ENCODE measurements at regions of chr2 and their contacts with region 1.

Region 1: GRCh38 chr2:71226965-71227560 is at the start of gene PAIP2B:
- DNase-seq: peak; percentile 99 to 100
- H3K4me3 ChIP-seq: peak within 1 kb of the TSS; percentile 81
- H3K4me3 Mint-ChIP-seq: peak within 1 kb of the TSS; percentile 94
- H3K27ac Mint-ChIP-seq: peak within 1 kb of the TSS; percentile 83
- H3K4me1 ChIP-seq: no peaks in the 10 kb centered on the region
- H3K4me1 Mint-ChIP-seq: no peaks in the 10 kb centered on the region
- H3K27me3 ChIP-seq: no peaks in the 10 kb centered on the region
- H3K27me3 Mint-ChIP-seq: no peaks in the 10 kb centered on the region
- CTCF ChIP-seq: no peak
- total RNA-seq, gene PAIP2B: 9.1 and 9.9 TPM in 2 replicates

Region 2: DNA sequence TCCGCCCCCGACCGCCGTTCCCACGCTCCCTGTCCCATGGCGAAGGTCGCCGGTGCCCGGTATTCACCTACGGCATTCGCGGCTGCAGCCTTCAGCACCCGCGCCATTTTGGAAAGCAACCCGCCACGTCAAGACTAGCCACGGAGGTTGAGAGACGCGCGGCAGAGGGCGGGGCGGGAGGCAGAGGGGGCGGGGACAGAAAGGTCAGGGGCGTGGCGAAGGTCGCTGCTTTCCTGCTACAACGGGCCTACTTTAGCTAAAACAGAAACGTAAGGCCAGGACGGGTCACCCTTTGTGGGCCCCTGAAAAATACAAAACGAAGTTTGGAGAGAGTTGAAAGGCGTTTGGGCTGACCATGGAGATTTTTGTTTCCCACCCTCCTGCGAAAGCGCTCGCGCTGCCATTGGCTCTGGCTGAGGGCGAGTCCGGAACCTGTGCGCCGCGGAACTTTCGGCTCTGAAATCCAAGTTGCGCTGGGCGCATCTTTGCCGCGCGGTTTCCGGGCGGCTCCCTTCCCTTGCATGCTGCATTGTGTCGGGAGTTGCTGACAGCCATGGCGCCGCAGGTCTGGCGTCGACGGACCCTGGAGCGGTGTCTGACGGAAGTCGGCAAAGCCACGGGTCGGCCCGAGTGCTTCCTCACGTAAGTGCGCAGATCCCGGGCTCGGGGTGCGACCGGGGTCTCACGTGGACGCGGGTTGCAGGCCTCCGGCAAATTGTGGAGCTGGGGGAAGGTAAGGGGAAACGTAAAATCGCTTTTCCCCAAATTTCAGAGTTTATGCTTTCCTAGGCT is 96.8 kb before region 1 on chr2 and contains the starts of genes MCEE and MPHOSPH10:
- CTCF ChIA-PET with region 1: no interaction called
- POLR2A ChIA-PET with region 1: no interaction called
- intact Hi-C with region 1: loop called (anchors 1 kb)
- DNase-seq: peak; percentile 93
- H3K4me3 ChIP-seq: peak within 1 kb of the TSS; percentile 73
- H3K4me3 Mint-ChIP-seq: no peak within 1 kb of the TSS
- H3K27ac Mint-ChIP-seq: no peak within 1 kb of the TSS
- H3K4me1 ChIP-seq: 0 out of 2 replicates have a peak, but pooled peaks cover 4% of the 10 kb centered on the region
- H3K4me1 Mint-ChIP-seq: no peaks in the 10 kb centered on the region
- H3K27me3 ChIP-seq: no peaks in the 10 kb centered on the region
- H3K27me3 Mint-ChIP-seq: no peaks in the 10 kb centered on the region
- CTCF ChIP-seq: no peak
- total RNA-seq, gene MCEE: 13.7 and 15.6 TPM in 2 replicates
- total RNA-seq, gene MPHOSPH10: 53.2 and 57.8 TPM in 2 replicates

Region 3: DNA sequence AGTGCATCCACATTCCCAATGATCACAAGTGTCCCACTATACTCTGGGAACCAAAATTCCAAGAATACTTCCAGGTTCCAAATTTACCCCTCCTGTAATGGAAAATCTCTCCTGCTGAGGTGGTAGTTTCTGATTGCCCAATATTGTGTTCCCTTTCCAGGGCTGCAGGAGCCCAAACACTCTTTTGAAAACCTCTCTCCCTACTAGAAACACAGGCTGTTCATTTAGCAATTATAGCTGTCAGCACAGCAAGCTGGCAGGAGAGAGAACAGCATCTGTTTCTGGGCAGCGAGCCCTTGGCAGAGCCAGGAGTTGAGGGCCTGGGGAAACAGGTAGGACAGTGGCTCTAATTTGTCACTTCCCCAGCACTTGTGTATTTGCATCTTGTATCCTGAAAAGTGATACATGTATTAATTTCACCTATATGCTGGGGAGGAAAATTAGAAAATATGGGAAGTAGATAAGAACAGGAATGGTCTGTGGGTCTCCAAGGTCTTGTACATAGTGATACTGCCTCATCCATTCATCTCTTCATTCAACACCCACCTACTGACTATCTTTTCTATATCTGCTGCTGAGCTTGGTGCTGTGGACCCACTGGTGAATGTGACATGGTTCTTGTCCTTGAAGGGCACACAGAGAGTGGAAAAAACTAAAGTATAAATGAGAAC is 16.7 kb after region 1 on chr2:
- CTCF ChIA-PET with region 1: interaction called, 7 read pairs
- POLR2A ChIA-PET with region 1: interaction called, 4 read pairs
- intact Hi-C with region 1: loop called (anchors 1 kb)
- DNase-seq: no peak
- H3K4me3 ChIP-seq: no peak overlapping the region
- H3K4me3 Mint-ChIP-seq: peak overlapping the region; percentile 25
- H3K27ac Mint-ChIP-seq: peak overlapping the region; percentile 73
- H3K4me1 ChIP-seq: peaks cover 20% of the 10 kb centered on the region
- H3K4me1 Mint-ChIP-seq: peaks cover 22% of the 10 kb centered on the region
- H3K27me3 ChIP-seq: no peaks in the 10 kb centered on the region
- H3K27me3 Mint-ChIP-seq: no peaks in the 10 kb centered on the region
- CTCF ChIP-seq: no peak

Region 4: DNA sequence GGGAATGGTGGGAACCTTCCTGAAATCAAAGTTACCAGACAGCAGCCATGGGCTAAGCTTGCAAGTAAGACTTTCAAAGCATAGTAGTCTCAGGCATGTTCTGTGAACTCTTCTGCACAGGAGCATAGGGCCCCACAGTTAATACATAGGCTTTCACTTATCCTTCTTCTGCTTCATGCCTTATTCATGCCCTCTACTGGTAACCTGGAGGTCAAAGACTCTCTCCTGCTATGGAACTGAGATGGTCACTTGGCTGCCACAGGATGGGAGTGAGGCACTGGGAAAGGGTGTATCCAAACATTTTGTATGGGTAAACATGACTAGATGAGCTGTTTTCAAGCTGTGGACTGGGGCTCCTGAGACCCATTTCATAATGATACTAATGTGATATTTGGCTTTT is 55.4 kb after region 1 on chr2:
- CTCF ChIA-PET with region 1: interaction called, 9 read pairs
- POLR2A ChIA-PET with region 1: no interaction called
- intact Hi-C with region 1: loop called (anchors 1 kb)
- DNase-seq: peak; percentile 46 to 58
- H3K4me3 ChIP-seq: no peak overlapping the region
- H3K4me3 Mint-ChIP-seq: no peak overlapping the region
- H3K27ac Mint-ChIP-seq: no peak overlapping the region
- H3K4me1 ChIP-seq: peaks cover 7% of the 10 kb centered on the region; the same call in 1 of the 2 replicates
- H3K4me1 Mint-ChIP-seq: no peaks in the 10 kb centered on the region
- H3K27me3 ChIP-seq: no peaks in the 10 kb centered on the region
- H3K27me3 Mint-ChIP-seq: peaks cover 6% of the 10 kb centered on the region
- CTCF ChIP-seq: peak; percentile 43 to 61

Region 5: DNA sequence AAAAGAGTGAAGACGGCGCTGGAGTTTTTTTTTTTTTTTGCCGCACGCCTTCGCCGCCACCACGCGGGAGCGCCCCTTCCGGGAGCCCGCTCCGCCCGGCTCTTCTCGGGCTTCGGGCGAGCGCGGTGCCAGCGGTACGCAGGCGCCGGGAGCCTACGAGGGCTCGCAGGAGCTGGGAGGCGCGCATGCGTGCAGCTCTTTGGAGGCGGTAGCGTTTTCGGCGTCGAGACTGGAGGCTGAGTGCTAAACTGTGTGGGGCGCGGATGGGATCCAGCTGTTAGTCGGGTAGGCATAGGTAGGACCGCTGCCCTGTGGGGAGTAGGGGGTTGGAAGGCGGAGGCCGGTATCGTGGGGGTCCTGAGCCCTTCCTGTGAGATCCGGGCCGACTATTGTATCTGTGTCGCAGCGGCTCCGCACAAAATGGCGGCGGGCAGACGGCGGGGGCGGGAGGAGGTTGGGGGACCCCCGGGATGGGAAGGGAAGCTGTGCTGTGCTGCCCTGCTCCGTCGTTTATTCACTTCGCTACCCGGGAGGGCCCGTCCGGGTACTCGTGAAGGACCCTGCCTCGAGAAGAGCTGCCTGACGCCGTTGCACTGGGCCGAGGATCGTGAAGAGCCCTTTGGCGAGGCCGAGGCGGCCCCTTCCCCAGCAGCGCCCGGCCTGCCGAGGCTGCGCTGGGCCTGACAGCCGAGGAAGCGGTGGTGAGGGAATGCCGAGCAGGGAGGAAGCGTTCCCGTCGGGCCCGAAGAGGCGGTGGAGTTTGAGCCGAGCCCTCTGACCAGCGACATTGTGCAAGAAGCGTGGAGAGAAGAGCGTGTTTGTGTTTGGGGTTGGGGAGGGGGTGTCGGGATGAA is 104.7 kb after region 1 on chr2 and contains the start of gene ZNF638:
- CTCF ChIA-PET with region 1: interaction called, 7 read pairs
- POLR2A ChIA-PET with region 1: interaction called, 28 read pairs
- intact Hi-C with region 1: loop called (anchors 1 kb)
- DNase-seq: peak; percentile 89 to 95
- H3K4me3 ChIP-seq: peak within 1 kb of the TSS; percentile 92
- H3K4me3 Mint-ChIP-seq: peak within 1 kb of the TSS; percentile 98
- H3K27ac Mint-ChIP-seq: peak within 1 kb of the TSS; percentile 99
- H3K4me1 ChIP-seq: peaks cover 11% of the 10 kb centered on the region; the same call in 1 of the 2 replicates
- H3K4me1 Mint-ChIP-seq: peaks cover 23% of the 10 kb centered on the region
- H3K27me3 ChIP-seq: no peaks in the 10 kb centered on the region
- H3K27me3 Mint-ChIP-seq: no peaks in the 10 kb centered on the region
- CTCF ChIP-seq: peak; percentile 68 to 77
- total RNA-seq, gene ZNF638: 133 and 134 TPM in 2 replicates

Region 6: GRCh38 chr2:71691747-71692501 is 464.9 kb after region 1 on chr2:
- CTCF ChIA-PET with region 1: no interaction called
- POLR2A ChIA-PET with region 1: no interaction called
- intact Hi-C with region 1: no loop called
- DNase-seq: no peak
- H3K4me3 ChIP-seq: no peak overlapping the region
- H3K4me3 Mint-ChIP-seq: no peak overlapping the region
- H3K27ac Mint-ChIP-seq: no peak overlapping the region
- H3K4me1 ChIP-seq: no peaks in the 10 kb centered on the region
- H3K4me1 Mint-ChIP-seq: no peaks in the 10 kb centered on the region
- H3K27me3 ChIP-seq: no peaks in the 10 kb centered on the region
- H3K27me3 Mint-ChIP-seq: peaks cover 7% of the 10 kb centered on the region
- CTCF ChIP-seq: no peak